Esophagus muscularis mucosa (tissue), 4 donors: ENCODE measurements at regions of chr3 and their contacts with region 1.

Region 1: DNA sequence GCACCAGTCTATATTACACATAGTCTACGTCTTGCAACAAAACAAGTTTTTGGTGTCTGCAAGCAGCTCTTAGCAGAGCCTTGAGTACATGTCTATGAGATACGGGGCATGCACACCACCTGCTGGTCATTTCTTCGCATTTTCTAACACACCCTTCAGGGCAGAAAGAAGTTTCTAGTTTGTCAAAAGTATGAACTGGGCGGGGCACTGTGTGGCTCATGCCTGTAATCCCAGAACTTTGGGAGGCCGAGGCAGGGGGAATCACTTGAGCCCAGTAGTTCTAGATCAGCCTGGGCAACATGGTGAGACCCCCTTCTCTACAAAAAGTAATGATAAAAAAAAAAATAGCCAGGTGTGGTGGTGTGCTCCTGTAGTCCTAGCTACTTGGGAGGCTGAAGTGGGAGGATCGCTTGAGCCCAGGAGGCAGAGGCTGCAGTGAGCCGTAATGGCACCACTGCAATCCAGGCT is 64.2 kb upstream of the ARL8B start:
- DNase-seq: no peak
- H3K4me3 ChIP-seq: no peak overlapping the region
- H3K27ac ChIP-seq: no peak overlapping the region
- H3K4me1 ChIP-seq: peaks cover 7 to 17% (median 13%) of the 10 kb centered on the region in 4 donors
- H3K27me3 ChIP-seq: no peaks in the 10 kb centered on the region
- CTCF ChIP-seq: peak; percentile 72 to 79 (median 72)
- EP300 ChIP-seq: no peak
- POLR2A ChIP-seq: no peak

Region 2: GRCh38 chr3:4656059-4656458 is 401.8 kb before region 1 on chr3:
- intact Hi-C with region 1: loop called (anchors 5 kb)
- DNase-seq: no peak
- H3K4me3 ChIP-seq: no peak overlapping the region
- H3K27ac ChIP-seq: peak overlapping the region; percentile 56 to 74 (median 62)
- H3K4me1 ChIP-seq: peaks cover 10 to 27% (median 22%) of the 10 kb centered on the region in 4 donors
- H3K27me3 ChIP-seq: no peaks in the 10 kb centered on the region
- CTCF ChIP-seq: peak; percentile 79 to 87 (median 81)
- EP300 ChIP-seq: no peak
- POLR2A ChIP-seq: no peak

Region 3: DNA sequence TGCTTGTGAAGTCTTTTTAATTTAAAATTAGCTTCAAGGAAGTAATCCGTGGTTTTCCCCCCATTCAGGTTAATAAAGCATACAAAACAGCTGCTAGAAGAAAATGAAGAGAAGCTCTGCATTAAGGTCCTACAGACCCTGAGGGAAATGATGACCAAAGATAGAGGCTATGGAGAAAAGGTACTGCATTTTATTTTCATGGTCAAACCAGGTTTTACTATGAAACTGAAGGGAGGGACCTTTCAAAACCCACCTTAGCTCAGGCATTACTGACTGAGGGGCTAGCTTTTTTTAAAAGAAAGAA is 346.2 kb before region 1 on chr3:
- intact Hi-C with region 1: loop called (anchors 2 kb)
- DNase-seq: no peak
- H3K4me3 ChIP-seq: no peak overlapping the region
- H3K27ac ChIP-seq: peak overlapping the region; percentile 11 to 82 (median 58)
- H3K4me1 ChIP-seq: peaks cover 4 to 32% (median 16%) of the 10 kb centered on the region in 4 donors
- H3K27me3 ChIP-seq: no peaks in the 10 kb centered on the region
- CTCF ChIP-seq: no peak
- EP300 ChIP-seq: no peak
- POLR2A ChIP-seq: no peak

Region 4: GRCh38 chr3:4807381-4808280 is 250.3 kb before region 1 on chr3:
- intact Hi-C with region 1: loop called (anchors 10 kb)
- DNase-seq: no peak
- H3K4me3 ChIP-seq: no peak overlapping the region
- H3K27ac ChIP-seq: peak overlapping the region; percentile 57 to 74 (median 68)
- H3K4me1 ChIP-seq: peaks cover 0 to 74% (median 44%) of the 10 kb centered on the region in 4 donors
- H3K27me3 ChIP-seq: no peaks in the 10 kb centered on the region
- CTCF ChIP-seq: peak in 1 of 3 experiments; percentile 11
- EP300 ChIP-seq: peak; percentile 41
- POLR2A ChIP-seq: no peak

Region 5: DNA sequence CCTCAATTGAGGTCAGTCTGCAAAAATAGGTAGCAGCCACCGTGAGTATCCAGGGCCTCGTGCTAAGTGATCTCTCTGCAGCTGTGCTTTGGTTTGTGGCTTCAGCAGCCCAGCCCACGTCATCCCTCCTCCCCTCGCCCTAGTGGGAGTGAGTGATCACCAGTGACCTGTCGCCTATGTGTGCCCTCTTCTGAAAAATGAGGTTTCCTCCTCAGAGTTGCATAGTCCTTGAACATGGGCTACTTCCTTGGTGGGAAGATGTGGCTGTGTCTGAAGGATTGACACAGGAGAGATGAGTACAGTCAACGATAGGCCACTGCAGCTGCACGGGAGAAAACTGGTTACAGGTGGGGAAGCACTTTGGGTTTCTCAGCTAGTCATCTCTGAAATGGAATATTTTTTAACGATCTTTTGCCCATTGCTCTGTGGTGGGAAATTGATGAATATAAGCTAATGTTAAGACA is 223.5 kb before region 1 on chr3:
- intact Hi-C with region 1: no loop called
- DNase-seq: no peak
- H3K4me3 ChIP-seq: no peak overlapping the region
- H3K27ac ChIP-seq: no peak overlapping the region
- H3K4me1 ChIP-seq: peaks cover 9 to 23% (median 20%) of the 10 kb centered on the region in 4 donors
- H3K27me3 ChIP-seq: no peaks in the 10 kb centered on the region
- CTCF ChIP-seq: no peak
- EP300 ChIP-seq: no peak
- POLR2A ChIP-seq: no peak

Region 6: GRCh38 chr3:6421666-6422445 is 1364.0 kb after region 1 on chr3:
- intact Hi-C with region 1: no loop called
- DNase-seq: no peak
- H3K4me3 ChIP-seq: no peak overlapping the region
- H3K27ac ChIP-seq: no peak overlapping the region
- H3K4me1 ChIP-seq: no peaks in the 10 kb centered on the region
- H3K27me3 ChIP-seq: no peaks in the 10 kb centered on the region
- CTCF ChIP-seq: no peak
- EP300 ChIP-seq: no peak
- POLR2A ChIP-seq: no peak